ENCODE measurements at regions of chr5 and their contacts with region 1.

Region 1: DNA sequence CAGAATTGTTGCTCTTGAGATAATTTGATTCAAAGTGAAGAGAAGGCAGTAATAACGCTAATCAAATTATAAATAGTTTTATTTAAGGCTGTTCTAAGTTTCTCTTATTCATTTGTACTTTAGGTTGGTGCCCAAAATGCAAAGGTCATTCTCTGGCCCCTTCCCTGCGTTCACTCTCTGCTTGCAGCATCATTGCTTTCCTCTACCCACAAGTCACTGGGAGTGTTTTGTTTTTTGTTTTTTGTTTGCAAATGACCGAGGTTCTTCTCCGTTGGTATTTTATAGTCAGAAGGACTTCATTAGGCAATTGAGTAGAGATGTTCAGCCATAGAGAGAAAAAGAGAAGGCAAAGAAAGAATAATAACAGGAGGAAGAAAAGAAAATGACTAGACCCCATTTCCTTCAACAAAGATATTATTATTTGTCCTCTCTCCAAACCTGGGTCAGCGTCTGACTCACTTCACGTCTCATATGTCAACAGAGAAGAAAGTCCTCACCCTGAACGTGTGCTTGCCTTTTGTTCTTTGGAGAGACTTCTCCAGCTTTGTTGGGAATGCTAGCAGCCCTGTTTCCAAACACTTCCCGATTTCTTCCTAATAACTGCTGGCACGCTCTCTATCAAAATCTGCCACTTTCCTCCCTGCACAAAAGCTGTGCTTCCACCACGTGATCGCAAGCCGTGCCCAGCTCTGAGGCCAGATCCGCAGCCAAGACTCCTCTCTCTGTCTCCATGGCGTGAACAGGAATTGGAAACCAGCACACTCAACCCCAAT is 119.8 kb downstream of the EBF1 start:
- DNase-seq: peak; percentile 72
- H3K4me3 Mint-ChIP-seq: peak overlapping the region; percentile 42
- H3K27ac Mint-ChIP-seq: peak overlapping the region; percentile 65
- H3K4me1 Mint-ChIP-seq: peaks cover 29% of the 10 kb centered on the region
- H3K27me3 Mint-ChIP-seq: no peaks in the 10 kb centered on the region
- CTCF ChIP-seq: no peak

Region 2: GRCh38 chr5:158482127-158482526 is 497.8 kb before region 1 on chr5:
- CTCF ChIA-PET with region 1: no interaction called
- POLR2A ChIA-PET with region 1: no interaction called
- intact Hi-C with region 1: no loop called
- DNase-seq: no peak
- H3K4me3 Mint-ChIP-seq: no peak overlapping the region
- H3K27ac Mint-ChIP-seq: no peak overlapping the region
- H3K4me1 Mint-ChIP-seq: peaks cover 9% of the 10 kb centered on the region
- H3K27me3 Mint-ChIP-seq: no peaks in the 10 kb centered on the region
- CTCF ChIP-seq: no peak

Region 3: GRCh38 chr5:158992037-158992740 is 12.3 kb after region 1 on chr5:
- CTCF ChIA-PET with region 1: interaction called, 3 read pairs
- POLR2A ChIA-PET with region 1: interaction called, 12 read pairs
- intact Hi-C with region 1: no loop called
- DNase-seq: peak; percentile 92
- H3K4me3 Mint-ChIP-seq: no peak overlapping the region
- H3K27ac Mint-ChIP-seq: peak overlapping the region; percentile 57
- H3K4me1 Mint-ChIP-seq: peaks cover 50% of the 10 kb centered on the region
- H3K27me3 Mint-ChIP-seq: no peaks in the 10 kb centered on the region
- CTCF ChIP-seq: no peak